Activated CD8-positive, alpha-beta T cell treated with anti-CD3 and anti-CD28 coated beads, Interleukin-2, amount 10 ng/mL, durations not matched to agents 7 days and 5 days (primary cell): ENCODE measurements at regions of chr4 and their contacts with region 1.

Region 1: DNA sequence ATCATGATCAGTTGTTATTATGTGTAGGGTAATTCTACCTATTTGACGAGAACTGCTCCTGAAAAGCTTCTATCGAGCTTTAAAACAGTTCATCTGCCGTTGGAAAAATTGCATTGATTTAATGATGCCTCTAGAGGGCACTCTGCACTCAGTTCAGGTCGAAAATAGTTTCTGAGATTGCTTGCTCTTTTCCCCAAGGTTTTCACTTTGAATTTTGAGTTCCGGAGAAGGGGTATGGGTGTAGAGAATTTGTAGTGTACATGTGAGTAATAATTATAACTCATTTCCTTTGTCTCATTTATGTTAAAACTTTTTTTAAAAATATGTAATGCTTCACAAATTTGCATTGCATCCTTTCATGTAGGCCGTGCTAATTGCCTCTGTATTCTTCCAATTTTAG is 28.4 kb upstream of the TNIP3 start:
- DNase-seq: no peak
- ATAC-seq: no peak
- H3K4me3 Mint-ChIP-seq: peak overlapping the region; percentile 6
- H3K27ac Mint-ChIP-seq: peak overlapping the region; percentile 60
- H3K4me1 Mint-ChIP-seq: peaks cover 53% of the 10 kb centered on the region
- H3K27me3 Mint-ChIP-seq: no peaks in the 10 kb centered on the region

Region 2: GRCh38 chr4:120915336-120915735 is 277.1 kb before region 1 on chr4:
- CTCF ChIA-PET with region 1: no interaction called
- POLR2A ChIA-PET with region 1: no interaction called
- DNase-seq: no peak
- ATAC-seq: no peak
- H3K4me3 Mint-ChIP-seq: no peak overlapping the region
- H3K27ac Mint-ChIP-seq: no peak overlapping the region
- H3K4me1 Mint-ChIP-seq: peaks cover 2% of the 10 kb centered on the region
- H3K27me3 Mint-ChIP-seq: peaks cover 7% of the 10 kb centered on the region

Region 3: DNA sequence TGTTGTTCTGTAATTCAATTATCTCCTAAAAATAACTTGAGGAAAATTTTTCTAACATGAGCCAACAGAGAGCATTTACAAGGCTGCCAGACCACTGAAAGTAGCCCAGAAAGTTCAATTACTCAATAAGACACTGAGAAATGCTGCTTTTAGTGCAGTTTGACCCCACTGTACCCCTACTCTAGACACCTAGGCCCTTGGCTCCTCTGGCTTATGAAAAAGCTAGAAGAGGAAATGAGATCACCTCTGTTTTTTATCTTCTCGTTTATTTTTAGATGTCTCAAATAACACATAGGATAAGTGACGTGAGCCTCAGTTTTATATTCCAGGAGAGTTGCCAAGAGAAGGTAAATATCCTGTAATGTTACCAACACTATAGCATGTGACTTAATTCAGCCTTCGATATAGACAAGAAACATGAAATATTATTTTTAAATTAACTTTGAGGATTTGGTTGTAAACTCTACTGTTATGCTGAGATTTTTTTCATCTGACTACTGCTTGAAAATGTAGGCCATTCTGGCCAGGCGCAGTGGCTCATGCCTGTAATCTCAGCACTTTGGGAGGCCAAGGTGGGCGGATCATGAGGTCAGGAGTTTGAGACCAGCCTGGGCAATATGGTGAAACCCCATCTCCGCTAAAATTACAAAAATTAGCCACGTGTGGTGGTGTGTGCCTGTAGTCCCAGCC is 52.8 kb before region 1 on chr4:
- CTCF ChIA-PET with region 1: interaction called, 18 read pairs
- POLR2A ChIA-PET with region 1: interaction called, 4 read pairs
- DNase-seq: no peak
- ATAC-seq: peak; percentile 57
- H3K4me3 Mint-ChIP-seq: no peak overlapping the region
- H3K27ac Mint-ChIP-seq: peak overlapping the region; percentile 80
- H3K4me1 Mint-ChIP-seq: peaks cover 39% of the 10 kb centered on the region
- H3K27me3 Mint-ChIP-seq: no peaks in the 10 kb centered on the region

Region 4: GRCh38 chr4:121156822-121157769 is 35.4 kb before region 1 on chr4:
- CTCF ChIA-PET with region 1: interaction called, 17 read pairs
- POLR2A ChIA-PET with region 1: interaction called, 7 read pairs
- DNase-seq: peak; percentile 43
- ATAC-seq: peak; percentile 66
- H3K4me3 Mint-ChIP-seq: peak overlapping the region; percentile 79
- H3K27ac Mint-ChIP-seq: peak overlapping the region; percentile 78
- H3K4me1 Mint-ChIP-seq: peaks cover 50% of the 10 kb centered on the region
- H3K27me3 Mint-ChIP-seq: no peaks in the 10 kb centered on the region

Region 5: DNA sequence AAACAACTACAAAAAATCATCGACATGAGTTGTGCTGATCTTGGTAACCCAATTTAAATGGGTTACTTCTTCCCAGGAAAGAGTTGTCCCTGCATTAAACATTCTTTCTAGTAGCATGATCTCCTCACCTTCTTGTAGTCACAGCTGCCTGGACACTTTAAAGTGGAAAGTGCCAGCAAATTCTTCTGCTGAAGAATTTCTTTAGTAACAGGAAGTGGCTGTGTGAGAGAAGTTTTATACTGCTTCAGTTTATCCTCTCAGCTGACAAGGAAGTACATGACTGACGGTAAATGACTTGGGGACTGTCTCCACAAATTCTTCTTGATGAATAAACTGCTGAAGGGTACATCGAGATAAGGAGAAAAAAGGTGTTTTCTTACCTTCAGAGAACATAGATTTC is 10.2 kb before region 1 on chr4:
- CTCF ChIA-PET with region 1: interaction called, 36 read pairs
- POLR2A ChIA-PET with region 1: interaction called, 6 read pairs
- DNase-seq: peak; percentile 41
- ATAC-seq: peak; percentile 81
- H3K4me3 Mint-ChIP-seq: peak overlapping the region; percentile 75
- H3K27ac Mint-ChIP-seq: peak overlapping the region; percentile 89
- H3K4me1 Mint-ChIP-seq: peaks cover 62% of the 10 kb centered on the region
- H3K27me3 Mint-ChIP-seq: no peaks in the 10 kb centered on the region

Region 6: GRCh38 chr4:121243485-121243884 is 51.0 kb after region 1 on chr4:
- CTCF ChIA-PET with region 1: interaction called, 130 read pairs
- POLR2A ChIA-PET with region 1: interaction called, 3 read pairs
- DNase-seq: no peak
- ATAC-seq: no peak
- H3K4me3 Mint-ChIP-seq: peak overlapping the region; percentile 20
- H3K27ac Mint-ChIP-seq: peak overlapping the region; percentile 14
- H3K4me1 Mint-ChIP-seq: peaks cover 2% of the 10 kb centered on the region
- H3K27me3 Mint-ChIP-seq: no peaks in the 10 kb centered on the region

Region 7: DNA sequence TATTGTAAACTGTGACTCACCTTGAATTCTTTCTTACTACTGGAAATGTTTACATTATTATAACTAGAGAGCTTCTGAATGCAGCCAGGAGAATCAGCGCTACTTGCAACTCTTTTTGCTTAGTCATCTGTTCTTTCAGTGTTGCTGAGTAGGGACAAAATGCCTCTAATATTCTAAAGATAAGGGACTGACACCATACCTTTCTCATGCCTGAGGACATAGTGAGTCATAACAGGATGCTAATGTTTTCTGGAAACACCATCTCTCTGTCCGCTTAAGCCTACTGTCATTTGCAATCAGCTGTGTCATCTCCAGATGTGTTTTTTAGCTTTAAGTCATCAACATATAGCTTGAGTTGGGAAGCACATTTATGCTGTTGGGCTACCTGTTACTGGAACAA is 80.0 kb after region 1 on chr4:
- CTCF ChIA-PET with region 1: interaction called, 31 read pairs
- POLR2A ChIA-PET with region 1: no interaction called
- DNase-seq: no peak
- ATAC-seq: no peak
- H3K4me3 Mint-ChIP-seq: no peak overlapping the region
- H3K27ac Mint-ChIP-seq: no peak overlapping the region
- H3K4me1 Mint-ChIP-seq: peaks cover 7% of the 10 kb centered on the region
- H3K27me3 Mint-ChIP-seq: peaks cover 3% of the 10 kb centered on the region

Region 8: GRCh38 chr4:121582296-121582695 is 389.8 kb after region 1 on chr4:
- CTCF ChIA-PET with region 1: no interaction called
- POLR2A ChIA-PET with region 1: no interaction called
- DNase-seq: no peak
- ATAC-seq: no peak
- H3K4me3 Mint-ChIP-seq: no peak overlapping the region
- H3K27ac Mint-ChIP-seq: no peak overlapping the region
- H3K4me1 Mint-ChIP-seq: no peaks in the 10 kb centered on the region
- H3K27me3 Mint-ChIP-seq: peaks cover 15% of the 10 kb centered on the region